CD4-positive, alpha-beta T cell (primary cell): ENCODE measurements at regions of chr3 and their contacts with region 1.

Region 1: GRCh38 chr3:63967675-63968611 is 55.4 kb downstream of the PSMD6 start:
- DNase-seq: peak; percentile 16 to 89 (median 39)
- ATAC-seq: peak; percentile 73
- H3K4me3 ChIP-seq: peak overlapping the region; percentile 72
- H3K4me3 Mint-ChIP-seq: peak overlapping the region; percentile 95
- H3K27ac ChIP-seq: peak overlapping the region; percentile 73 to 85
- H3K27ac Mint-ChIP-seq: peak overlapping the region; percentile 94
- H3K4me1 ChIP-seq: peaks cover 31% of the 10 kb centered on the region
- H3K4me1 Mint-ChIP-seq: peaks cover 58% of the 10 kb centered on the region
- H3K27me3 ChIP-seq: no peaks in the 10 kb centered on the region
- H3K27me3 Mint-ChIP-seq: no peaks in the 10 kb centered on the region
- CTCF ChIP-seq: no peak

Region 2: DNA sequence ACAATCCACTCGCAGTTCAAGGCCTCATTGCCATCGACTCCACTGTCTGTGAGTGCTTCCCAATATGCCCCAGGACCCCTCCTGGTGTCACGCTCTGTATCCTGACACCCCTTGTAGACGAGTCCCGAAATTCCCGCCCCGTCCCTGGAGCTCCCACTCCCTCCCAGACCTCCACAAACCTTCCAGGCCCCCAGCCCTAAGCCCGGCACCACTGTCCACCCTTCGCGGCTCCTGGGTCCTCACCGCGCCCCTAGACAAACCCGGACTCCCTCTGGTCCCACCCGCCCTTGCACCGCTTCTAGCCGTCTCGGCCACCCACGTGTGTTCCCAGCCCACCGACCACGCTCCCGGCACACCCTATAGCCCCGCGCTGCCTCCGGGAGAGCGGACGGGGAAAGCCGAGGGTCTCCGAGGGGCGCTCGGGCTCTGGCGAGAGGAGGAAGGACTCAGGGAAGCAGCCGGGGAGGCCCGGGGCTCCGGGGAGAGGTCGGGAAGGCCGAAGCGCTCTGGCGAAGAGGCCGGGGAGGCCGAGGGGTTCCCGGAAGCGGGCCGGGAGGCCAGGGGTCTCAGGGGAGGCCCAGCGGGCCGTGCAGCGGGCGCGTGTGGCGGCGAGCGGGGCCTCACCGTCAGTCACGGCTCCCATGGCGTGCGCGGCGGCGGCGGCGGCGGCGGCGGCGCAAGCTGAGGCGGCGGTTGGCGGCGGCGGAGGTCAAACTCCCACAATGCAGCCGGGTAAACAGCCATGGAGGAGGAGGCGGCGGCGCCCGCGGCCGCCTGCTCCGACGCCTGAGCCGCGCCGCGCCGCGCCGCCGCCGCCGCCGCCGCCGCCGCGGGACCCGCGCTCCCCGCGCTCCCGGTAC is 104.6 kb before region 1 on chr3 and contains the starts of genes ATXN7 and THOC7:
- CTCF ChIA-PET with region 1: no interaction called
- POLR2A ChIA-PET with region 1: interaction called, 14 read pairs
- intact Hi-C with region 1: loop called in 1 of 2 experiments (anchors 5 kb)
- DNase-seq: peak; percentile 55 to 89 (median 68)
- ATAC-seq: peak; percentile 84
- H3K4me3 ChIP-seq: peak within 1 kb of the TSS; percentile 85
- H3K4me3 Mint-ChIP-seq: peak within 1 kb of the TSS; percentile 89
- H3K27ac ChIP-seq: peak within 1 kb of the TSS in 1 of 2 donors; percentile 50
- H3K27ac Mint-ChIP-seq: peak within 1 kb of the TSS; percentile 86
- H3K4me1 ChIP-seq: peaks cover 34% of the 10 kb centered on the region
- H3K4me1 Mint-ChIP-seq: peaks cover 73% of the 10 kb centered on the region
- H3K27me3 ChIP-seq: no peaks in the 10 kb centered on the region
- H3K27me3 Mint-ChIP-seq: no peaks in the 10 kb centered on the region
- CTCF ChIP-seq: no peak
- total RNA-seq, gene ATXN7: 289 to 304 TPM
- total RNA-seq, gene THOC7: 21.6 to 23.7 TPM

Region 3: DNA sequence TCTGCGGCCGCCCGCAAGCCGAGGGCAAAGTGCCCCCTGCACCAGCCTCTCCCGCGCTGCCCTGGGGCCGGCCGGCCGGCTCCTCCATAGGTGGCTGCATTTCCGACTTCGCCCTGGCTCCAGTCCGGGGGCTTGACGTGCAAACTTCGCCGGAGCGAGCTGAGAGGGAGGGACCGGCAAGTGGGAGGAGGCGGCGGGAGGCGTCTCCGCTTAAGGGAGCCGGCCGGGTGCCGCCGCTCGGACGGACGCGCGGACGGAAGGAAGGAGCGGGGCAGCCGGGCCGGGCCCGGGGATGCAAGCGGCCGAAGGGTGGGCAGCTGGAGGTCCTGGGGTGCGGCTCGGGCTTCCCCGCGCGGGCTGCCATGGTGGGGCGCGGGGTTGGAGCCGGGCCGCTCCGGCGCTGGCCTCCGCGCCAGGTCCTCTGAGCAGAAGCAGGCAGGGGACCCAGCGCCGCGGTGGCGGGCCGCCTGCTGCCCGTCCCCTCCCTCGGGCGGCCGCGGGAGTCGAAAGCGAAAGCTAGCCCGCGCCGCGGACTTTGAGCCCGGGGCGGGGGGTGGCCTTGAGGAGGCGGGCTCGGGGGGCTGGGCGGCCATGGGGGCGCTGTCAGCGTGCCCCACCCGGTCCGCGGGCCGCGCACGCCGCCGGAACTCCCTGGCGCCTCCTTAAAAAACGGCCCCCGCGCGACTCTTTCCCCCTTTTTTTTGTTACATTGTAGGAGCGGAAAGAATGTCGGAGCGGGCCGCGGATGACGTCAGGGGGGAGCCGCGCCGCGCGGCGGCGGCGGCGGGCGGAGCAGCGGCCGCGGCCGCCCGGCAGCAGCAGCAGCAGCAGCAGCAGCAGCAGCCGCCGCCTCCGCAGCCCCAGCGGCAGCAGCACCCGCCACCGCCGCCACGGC is 55.8 kb before region 1 on chr3 and contains the start of gene SCAANT1:
- CTCF ChIA-PET with region 1: no interaction called
- POLR2A ChIA-PET with region 1: interaction called, 43 read pairs
- intact Hi-C with region 1: loop called in 1 of 2 experiments (anchors 2 kb)
- DNase-seq: peak; percentile 63 to 93 (median 77)
- ATAC-seq: peak; percentile 64
- H3K4me3 ChIP-seq: peak within 1 kb of the TSS; percentile 64
- H3K4me3 Mint-ChIP-seq: peak within 1 kb of the TSS; percentile 93
- H3K27ac ChIP-seq: peak within 1 kb of the TSS; percentile 70 to 83
- H3K27ac Mint-ChIP-seq: peak within 1 kb of the TSS; percentile 94
- H3K4me1 ChIP-seq: peaks cover 24% of the 10 kb centered on the region
- H3K4me1 Mint-ChIP-seq: peaks cover 44% of the 10 kb centered on the region
- H3K27me3 ChIP-seq: no peaks in the 10 kb centered on the region
- H3K27me3 Mint-ChIP-seq: no peaks in the 10 kb centered on the region
- CTCF ChIP-seq: no peak
- total RNA-seq, gene SCAANT1: 1.4 to 2.1 TPM

Region 4: GRCh38 chr3:63986146-63986545 is 18.2 kb after region 1 on chr3:
- CTCF ChIA-PET with region 1: interaction called, 168 read pairs
- POLR2A ChIA-PET with region 1: interaction called, 270 read pairs
- intact Hi-C with region 1: no loop called
- DNase-seq: no peak
- ATAC-seq: no peak
- H3K4me3 ChIP-seq: no peak overlapping the region
- H3K4me3 Mint-ChIP-seq: no peak overlapping the region
- H3K27ac ChIP-seq: no peak overlapping the region
- H3K27ac Mint-ChIP-seq: peak overlapping the region; percentile 71
- H3K4me1 ChIP-seq: peaks cover 17% of the 10 kb centered on the region
- H3K4me1 Mint-ChIP-seq: peaks cover 72% of the 10 kb centered on the region
- H3K27me3 ChIP-seq: no peaks in the 10 kb centered on the region
- H3K27me3 Mint-ChIP-seq: no peaks in the 10 kb centered on the region
- CTCF ChIP-seq: no peak

Region 5: GRCh38 chr3:63993653-63994079 is 25.7 kb after region 1 on chr3:
- CTCF ChIA-PET with region 1: interaction called, 40 read pairs
- POLR2A ChIA-PET with region 1: interaction called, 24 read pairs
- intact Hi-C with region 1: no loop called
- DNase-seq: peak; percentile 33 to 81 (median 48)
- ATAC-seq: peak; percentile 87
- H3K4me3 ChIP-seq: no peak overlapping the region
- H3K4me3 Mint-ChIP-seq: peak overlapping the region; percentile 11
- H3K27ac ChIP-seq: no peak overlapping the region
- H3K27ac Mint-ChIP-seq: peak overlapping the region; percentile 83
- H3K4me1 ChIP-seq: peaks cover 14% of the 10 kb centered on the region
- H3K4me1 Mint-ChIP-seq: peaks cover 74% of the 10 kb centered on the region
- H3K27me3 ChIP-seq: no peaks in the 10 kb centered on the region
- H3K27me3 Mint-ChIP-seq: no peaks in the 10 kb centered on the region
- CTCF ChIP-seq: peak; percentile 95

Region 6: GRCh38 chr3:64016941-64017620 is 49.1 kb after region 1 on chr3:
- CTCF ChIA-PET with region 1: interaction called, 4 read pairs
- POLR2A ChIA-PET with region 1: interaction called, 33 read pairs
- intact Hi-C with region 1: loop called in 1 of 2 experiments (anchors 2 kb)
- DNase-seq: no peak
- ATAC-seq: no peak
- H3K4me3 ChIP-seq: no peak overlapping the region
- H3K4me3 Mint-ChIP-seq: peak overlapping the region; percentile 5
- H3K27ac ChIP-seq: no peak overlapping the region
- H3K27ac Mint-ChIP-seq: peak overlapping the region; percentile 38
- H3K4me1 ChIP-seq: peaks cover 8% of the 10 kb centered on the region
- H3K4me1 Mint-ChIP-seq: peaks cover 64% of the 10 kb centered on the region
- H3K27me3 ChIP-seq: no peaks in the 10 kb centered on the region
- H3K27me3 Mint-ChIP-seq: no peaks in the 10 kb centered on the region
- CTCF ChIP-seq: no peak

Region 7: DNA sequence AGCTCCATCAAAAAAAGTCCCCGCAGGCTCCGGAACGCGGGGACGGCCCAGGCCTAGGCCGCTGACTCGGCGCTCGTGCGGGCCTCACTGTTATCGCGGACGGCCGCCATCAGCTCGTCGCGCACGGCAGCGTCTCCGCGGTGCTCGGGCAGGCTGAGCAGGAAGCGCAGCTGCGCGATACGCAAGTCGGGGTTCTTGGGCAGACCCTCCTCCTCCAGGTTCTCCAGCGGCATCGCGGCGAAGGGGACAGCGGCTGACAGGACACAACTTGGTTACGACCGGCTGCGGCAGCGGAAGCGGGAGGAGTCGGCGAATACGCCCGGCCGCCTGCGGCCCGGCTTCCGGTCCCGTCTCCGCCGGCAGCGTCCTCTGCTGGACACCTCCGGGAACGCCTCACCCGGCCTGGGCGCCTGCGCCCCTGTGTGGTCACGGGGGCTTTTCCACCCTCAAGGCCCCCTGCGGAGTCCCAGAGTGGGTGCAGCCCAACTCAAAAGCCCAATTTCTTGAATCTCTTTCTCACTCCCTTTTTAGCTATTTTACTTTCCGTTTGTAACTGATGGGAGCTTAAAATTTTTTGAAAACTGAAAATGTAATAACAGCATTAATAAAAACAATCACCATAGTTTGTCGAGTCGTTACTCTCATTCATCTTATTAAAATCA is 55.4 kb after region 1 on chr3 and contains the start of gene PSMD6:
- CTCF ChIA-PET with region 1: interaction called, 11 read pairs
- POLR2A ChIA-PET with region 1: interaction called, 33 read pairs
- intact Hi-C with region 1: loop called in 1 of 2 experiments (anchors 2 kb)
- DNase-seq: peak; percentile 85 to 95 (median 91)
- ATAC-seq: peak; percentile 91
- H3K4me3 ChIP-seq: peak within 1 kb of the TSS; percentile 83
- H3K4me3 Mint-ChIP-seq: peak within 1 kb of the TSS; percentile 92
- H3K27ac ChIP-seq: peak within 1 kb of the TSS; percentile 81
- H3K27ac Mint-ChIP-seq: peak within 1 kb of the TSS; percentile 81
- H3K4me1 ChIP-seq: peaks cover 25% of the 10 kb centered on the region
- H3K4me1 Mint-ChIP-seq: peaks cover 38% of the 10 kb centered on the region
- H3K27me3 ChIP-seq: peaks cover under 1 to 7% of the 10 kb centered on the region in 2 experiments
- H3K27me3 Mint-ChIP-seq: peaks cover 14% of the 10 kb centered on the region
- CTCF ChIP-seq: peak; percentile 100
- total RNA-seq, gene PSMD6: 119 to 126 TPM